CD4-positive, alpha-beta memory T cell (primary cell): ENCODE measurements at regions of chr17 and their contacts with region 1.

Region 1: GRCh38 chr17:48618256-48618897 is 3.3 kb upstream of the HOXB8 start:
- DNase-seq: peak; percentile 73 to 84 (median 77)
- H3K4me3 ChIP-seq: no peak overlapping the region
- H3K4me3 Mint-ChIP-seq: peak overlapping the region in 6 of 8 donors; percentile 16 to 59 (median 35)
- H3K27ac ChIP-seq: no peak overlapping the region
- H3K27ac Mint-ChIP-seq: peak overlapping the region in 4 of 7 donors; percentile 75 to 91 (median 80)
- H3K4me1 ChIP-seq: peaks cover 35% of the 10 kb centered on the region
- H3K4me1 Mint-ChIP-seq: peaks cover 17 to 59% (median 30%) of the 10 kb centered on the region in 4 donors
- H3K27me3 ChIP-seq: peaks cover 89% of the 10 kb centered on the region
- H3K27me3 Mint-ChIP-seq: peaks cover 71 to 83% of the 10 kb centered on the region in 2 donors

Region 2: DNA sequence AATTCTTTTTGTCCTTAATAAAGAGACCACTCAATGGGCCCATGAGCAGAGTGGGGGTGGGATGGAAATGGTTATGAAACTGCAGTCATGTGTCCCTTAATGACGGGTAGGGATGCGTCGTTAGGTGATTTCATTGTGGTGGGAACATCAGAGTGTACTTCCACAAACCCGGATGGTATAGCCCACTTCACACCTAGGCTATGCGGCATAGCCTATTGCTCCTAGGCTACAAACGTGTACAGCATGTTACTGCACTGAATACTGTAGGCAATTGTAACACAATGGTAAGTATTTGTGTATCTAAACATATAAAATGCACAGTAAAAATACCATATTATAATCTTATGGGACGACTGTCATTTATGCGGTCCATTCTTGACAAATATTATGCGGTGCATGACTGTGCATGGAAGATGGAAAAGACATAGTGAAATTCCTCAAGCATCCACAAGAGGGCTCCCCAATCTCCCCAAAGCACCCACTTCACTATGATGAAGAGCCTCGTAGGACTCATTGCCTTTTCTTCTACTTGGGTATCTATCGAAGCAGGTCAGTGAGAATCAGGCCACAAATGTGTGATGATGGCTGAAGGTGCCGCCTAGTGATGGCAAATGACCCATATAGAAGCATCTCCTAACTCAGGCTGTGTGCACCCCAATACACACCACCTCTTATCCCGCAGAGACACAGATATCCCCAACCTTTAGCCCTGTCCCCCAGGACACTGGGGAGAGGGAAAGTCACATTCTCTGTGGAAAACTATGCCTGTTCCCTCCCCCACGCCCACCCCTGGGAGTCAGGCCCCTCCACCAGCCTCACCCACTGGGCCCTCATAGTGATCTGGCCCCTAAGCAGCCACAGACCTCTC is 841.8 kb before region 1 on chr17:
- CTCF ChIA-PET with region 1: no interaction called
- POLR2A ChIA-PET with region 1: no interaction called
- intact Hi-C with region 1: loop called (anchors 2 kb)
- DNase-seq: peak; percentile 46 to 56 (median 48)
- H3K4me3 ChIP-seq: no peak overlapping the region
- H3K4me3 Mint-ChIP-seq: no peak overlapping the region
- H3K27ac ChIP-seq: no peak overlapping the region
- H3K27ac Mint-ChIP-seq: no peak overlapping the region
- H3K4me1 ChIP-seq: no peaks in the 10 kb centered on the region
- H3K4me1 Mint-ChIP-seq: peaks cover 0 to 5% (median 3%) of the 10 kb centered on the region in 4 donors
- H3K27me3 ChIP-seq: peaks cover 23% of the 10 kb centered on the region
- H3K27me3 Mint-ChIP-seq: peaks cover 33 to 35% of the 10 kb centered on the region in 2 donors

Region 3: DNA sequence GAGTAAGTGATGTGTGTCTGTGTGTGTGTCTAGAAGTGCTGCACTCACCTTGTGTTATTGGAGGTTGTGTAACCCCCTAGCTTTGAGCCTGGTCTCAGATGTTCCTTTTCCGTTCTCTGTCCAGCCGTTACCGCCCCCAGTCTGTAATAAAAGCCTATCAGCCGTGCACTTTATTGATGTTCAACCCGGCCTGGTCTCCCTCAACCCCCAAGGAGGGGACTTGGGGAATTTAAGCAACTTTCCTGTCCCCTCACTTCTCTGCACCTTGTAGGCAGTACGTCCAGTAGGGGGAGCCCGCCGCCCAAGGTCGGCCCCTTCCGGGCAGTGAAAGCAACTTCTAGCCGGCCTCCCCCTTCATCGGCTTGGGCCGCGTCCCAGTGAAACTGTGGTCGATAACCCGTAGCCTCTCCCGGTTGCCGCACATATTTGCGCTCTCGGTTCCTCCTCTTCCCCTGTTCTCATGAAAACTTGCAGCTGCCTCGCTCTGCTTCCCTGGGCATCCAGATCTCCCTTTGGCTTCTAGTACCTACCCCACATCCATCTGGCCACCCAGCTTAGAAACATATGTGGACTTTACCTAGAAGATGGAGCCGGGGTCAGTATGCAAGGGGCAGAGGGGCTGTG is 669.1 kb before region 1 on chr17:
- CTCF ChIA-PET with region 1: no interaction called
- POLR2A ChIA-PET with region 1: no interaction called
- intact Hi-C with region 1: loop called (anchors 1 kb)
- DNase-seq: peak; percentile 59 to 71 (median 63)
- H3K4me3 ChIP-seq: peak overlapping the region in 1 of 2 donors; percentile 51
- H3K4me3 Mint-ChIP-seq: peak overlapping the region; percentile 61 to 91 (median 74)
- H3K27ac ChIP-seq: peak overlapping the region; percentile 37
- H3K27ac Mint-ChIP-seq: peak overlapping the region; percentile 29 to 93 (median 69)
- H3K4me1 ChIP-seq: peaks cover 34% of the 10 kb centered on the region
- H3K4me1 Mint-ChIP-seq: peaks cover 21 to 36% (median 29%) of the 10 kb centered on the region in 4 donors
- H3K27me3 ChIP-seq: no peaks in the 10 kb centered on the region
- H3K27me3 Mint-ChIP-seq: no peaks in the 10 kb centered on the region

Region 4: DNA sequence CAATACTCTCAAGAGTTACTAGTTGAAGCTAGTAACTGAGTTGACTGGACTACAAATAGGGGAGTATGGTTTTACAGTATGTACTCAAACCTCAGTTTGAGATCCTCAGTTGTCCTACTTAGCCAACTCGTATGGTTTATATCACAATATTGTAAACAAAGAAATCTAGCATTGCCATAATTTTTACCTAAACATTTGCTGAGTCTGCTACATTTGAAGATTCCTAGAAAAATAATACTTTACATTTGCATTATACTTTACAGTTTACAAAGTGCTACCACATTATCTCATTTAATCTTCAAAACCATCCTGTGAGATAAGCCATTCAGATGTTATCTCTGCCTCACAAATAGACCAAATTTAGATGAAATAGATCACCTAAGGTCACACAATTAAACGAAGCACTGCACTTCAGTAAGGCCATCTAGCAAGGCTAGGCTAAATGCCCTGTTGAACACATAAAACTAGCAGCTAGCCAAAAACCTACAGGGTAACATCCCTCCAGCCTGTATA is 533.4 kb before region 1 on chr17:
- CTCF ChIA-PET with region 1: interaction called, 26 read pairs
- POLR2A ChIA-PET with region 1: no interaction called
- intact Hi-C with region 1: loop called (anchors 1 kb)
- DNase-seq: no peak
- H3K4me3 ChIP-seq: no peak overlapping the region
- H3K4me3 Mint-ChIP-seq: no peak overlapping the region
- H3K27ac ChIP-seq: no peak overlapping the region
- H3K27ac Mint-ChIP-seq: no peak overlapping the region
- H3K4me1 ChIP-seq: no peaks in the 10 kb centered on the region
- H3K4me1 Mint-ChIP-seq: peaks cover 7 to 10% (median 9%) of the 10 kb centered on the region in 4 donors
- H3K27me3 ChIP-seq: no peaks in the 10 kb centered on the region
- H3K27me3 Mint-ChIP-seq: no peaks in the 10 kb centered on the region

Region 5: GRCh38 chr17:48261297-48261880 is 357.0 kb before region 1 on chr17:
- CTCF ChIA-PET with region 1: interaction called, 12 read pairs
- POLR2A ChIA-PET with region 1: no interaction called
- intact Hi-C with region 1: no loop called
- DNase-seq: no peak
- H3K4me3 ChIP-seq: no peak overlapping the region
- H3K4me3 Mint-ChIP-seq: peak overlapping the region in 1 of 8 donors; percentile 8
- H3K27ac ChIP-seq: no peak overlapping the region
- H3K27ac Mint-ChIP-seq: peak overlapping the region in 2 of 7 donors; percentile 43 to 66
- H3K4me1 ChIP-seq: peaks cover 3% of the 10 kb centered on the region
- H3K4me1 Mint-ChIP-seq: peaks cover 6 to 28% (median 19%) of the 10 kb centered on the region in 4 donors
- H3K27me3 ChIP-seq: no peaks in the 10 kb centered on the region
- H3K27me3 Mint-ChIP-seq: no peaks in the 10 kb centered on the region

Region 6: DNA sequence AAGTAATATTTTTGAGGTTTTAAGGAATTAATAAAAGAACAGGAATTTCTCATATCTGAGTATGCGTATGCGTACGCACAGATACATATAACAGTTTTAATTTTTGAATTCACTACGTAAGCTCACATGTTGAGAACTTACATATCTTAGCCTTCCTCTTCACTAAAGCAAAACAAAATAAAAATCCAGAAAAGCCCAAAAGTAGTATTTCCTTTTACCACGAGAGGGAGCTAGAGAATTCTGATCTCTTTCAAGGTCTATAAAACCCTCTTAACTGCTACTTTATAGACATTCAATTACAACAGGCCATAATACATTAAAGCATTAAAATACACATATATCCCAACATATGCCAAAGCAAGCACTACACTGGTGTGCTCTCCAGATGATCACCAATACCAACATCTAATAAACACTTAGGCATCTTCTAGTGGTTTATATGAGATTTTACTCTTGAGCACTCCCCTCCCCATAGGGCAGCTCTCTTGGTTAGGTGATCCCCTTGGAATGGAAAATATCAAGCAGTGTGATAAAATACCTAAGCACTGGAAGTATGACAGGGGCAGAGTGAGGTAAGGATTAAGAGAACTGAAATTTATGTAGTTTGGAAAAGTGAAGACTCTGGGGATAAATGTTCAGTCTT is 282.4 kb before region 1 on chr17:
- CTCF ChIA-PET with region 1: interaction called, 8 read pairs
- POLR2A ChIA-PET with region 1: no interaction called
- intact Hi-C with region 1: loop called (anchors 1 kb)
- DNase-seq: peak in 4 of 5 donors; percentile 61 to 70 (median 66)
- H3K4me3 ChIP-seq: no peak overlapping the region
- H3K4me3 Mint-ChIP-seq: no peak overlapping the region
- H3K27ac ChIP-seq: no peak overlapping the region
- H3K27ac Mint-ChIP-seq: peak overlapping the region in 2 of 7 donors; percentile 63 to 65
- H3K4me1 ChIP-seq: no peaks in the 10 kb centered on the region
- H3K4me1 Mint-ChIP-seq: peaks cover 0 to 11% (median 4%) of the 10 kb centered on the region in 4 donors
- H3K27me3 ChIP-seq: no peaks in the 10 kb centered on the region
- H3K27me3 Mint-ChIP-seq: no peaks in the 10 kb centered on the region

Region 7: DNA sequence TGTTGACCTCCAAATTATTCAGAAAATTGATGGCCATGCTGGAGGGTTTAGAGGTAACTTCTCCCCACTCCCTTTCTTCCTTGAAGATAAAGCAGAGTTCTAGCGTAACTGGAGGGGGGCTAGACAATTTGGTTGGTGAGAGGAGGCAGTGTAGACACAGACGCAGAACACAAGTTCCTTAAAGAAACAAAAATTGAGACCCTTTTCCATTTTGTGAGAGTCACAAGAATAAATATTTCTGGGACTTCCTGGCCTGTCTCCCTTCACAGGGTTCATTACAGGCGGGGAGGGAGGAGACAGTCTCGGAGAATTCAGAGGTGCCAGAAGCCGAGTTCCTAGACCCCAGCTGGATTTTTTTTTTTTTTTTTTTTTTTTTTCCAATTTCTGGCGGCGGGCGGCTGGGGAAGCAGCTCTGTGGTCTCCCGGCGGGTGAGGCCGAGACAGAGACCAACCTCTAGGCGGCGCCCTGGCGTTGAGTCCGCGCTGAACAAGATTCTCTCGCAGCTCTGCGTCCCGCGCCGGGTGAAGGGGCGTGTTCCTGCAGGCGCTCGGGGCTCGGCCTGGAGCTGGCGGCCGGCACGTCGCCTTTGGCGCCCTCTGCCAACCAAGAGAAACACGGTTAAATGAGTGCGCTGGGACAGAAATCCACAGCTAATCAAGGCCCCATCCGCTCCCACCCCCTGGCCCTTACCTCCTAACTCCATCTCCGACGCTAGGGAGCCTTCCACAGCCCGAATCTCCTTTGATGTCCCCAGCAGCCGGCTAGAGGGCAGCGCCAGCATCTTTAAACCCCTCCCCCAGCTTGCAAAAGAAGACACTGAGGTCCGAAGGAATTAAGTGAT is 18.0 kb after region 1 on chr17:
- CTCF ChIA-PET with region 1: interaction called, 31 read pairs
- POLR2A ChIA-PET with region 1: no interaction called
- intact Hi-C with region 1: no loop called
- DNase-seq: peak in 3 of 5 donors; percentile 45 to 65 (median 60)
- H3K4me3 ChIP-seq: no peak overlapping the region
- H3K4me3 Mint-ChIP-seq: peak overlapping the region in 5 of 8 donors; percentile 6 to 46 (median 29)
- H3K27ac ChIP-seq: no peak overlapping the region
- H3K27ac Mint-ChIP-seq: peak overlapping the region in 1 of 7 donors; percentile 55
- H3K4me1 ChIP-seq: peaks cover 15% of the 10 kb centered on the region
- H3K4me1 Mint-ChIP-seq: peaks cover 1 to 19% (median 11%) of the 10 kb centered on the region in 4 donors
- H3K27me3 ChIP-seq: peaks cover 64% of the 10 kb centered on the region
- H3K27me3 Mint-ChIP-seq: peaks cover 64 to 78% of the 10 kb centered on the region in 2 donors